ENCODE measurements at regions of chr1 and their contacts with region 1.

Region 1: GRCh38 chr1:63615768-63616420 is 22.7 kb downstream of the PGM1 start:
- DNase-seq: peak; percentile 61
- CTCF ChIP-seq: peak; percentile 65

Region 2: DNA sequence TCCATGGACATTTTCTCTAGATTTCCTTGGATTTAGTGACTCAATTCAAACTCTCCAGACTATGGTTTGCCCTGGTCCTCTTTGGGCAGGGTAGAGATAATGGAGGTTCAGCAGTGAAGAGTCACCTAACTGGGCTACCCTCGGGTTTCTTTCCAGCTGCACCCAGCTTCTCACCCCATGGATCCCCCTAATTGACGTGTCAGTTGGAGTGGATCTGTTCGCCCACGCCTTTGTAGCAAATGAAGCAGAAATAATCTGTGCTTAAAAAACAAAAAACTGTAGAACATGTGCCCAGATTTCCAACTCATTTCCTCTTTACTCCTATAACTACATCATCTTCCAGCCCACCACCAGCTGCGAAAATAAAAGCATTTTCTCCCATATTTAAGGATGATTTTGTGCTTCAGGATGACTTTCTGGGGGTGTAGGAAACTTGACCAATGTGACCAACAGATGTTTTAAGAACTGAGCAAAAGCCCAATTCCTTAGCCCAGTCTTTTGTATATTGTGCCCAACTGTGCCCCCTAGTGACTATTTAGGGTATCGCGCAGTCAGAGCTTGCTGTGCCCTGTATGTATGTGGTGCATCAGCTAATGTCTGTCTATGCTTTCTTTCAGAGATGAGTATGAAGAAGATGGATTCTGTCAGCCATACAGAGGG is 521.0 kb after region 1 on chr1:
- in situ Hi-C with region 1: loop called (anchors 25 kb)
- DNase-seq: peak; percentile 43
- CTCF ChIP-seq: peak; percentile 73

Region 3: DNA sequence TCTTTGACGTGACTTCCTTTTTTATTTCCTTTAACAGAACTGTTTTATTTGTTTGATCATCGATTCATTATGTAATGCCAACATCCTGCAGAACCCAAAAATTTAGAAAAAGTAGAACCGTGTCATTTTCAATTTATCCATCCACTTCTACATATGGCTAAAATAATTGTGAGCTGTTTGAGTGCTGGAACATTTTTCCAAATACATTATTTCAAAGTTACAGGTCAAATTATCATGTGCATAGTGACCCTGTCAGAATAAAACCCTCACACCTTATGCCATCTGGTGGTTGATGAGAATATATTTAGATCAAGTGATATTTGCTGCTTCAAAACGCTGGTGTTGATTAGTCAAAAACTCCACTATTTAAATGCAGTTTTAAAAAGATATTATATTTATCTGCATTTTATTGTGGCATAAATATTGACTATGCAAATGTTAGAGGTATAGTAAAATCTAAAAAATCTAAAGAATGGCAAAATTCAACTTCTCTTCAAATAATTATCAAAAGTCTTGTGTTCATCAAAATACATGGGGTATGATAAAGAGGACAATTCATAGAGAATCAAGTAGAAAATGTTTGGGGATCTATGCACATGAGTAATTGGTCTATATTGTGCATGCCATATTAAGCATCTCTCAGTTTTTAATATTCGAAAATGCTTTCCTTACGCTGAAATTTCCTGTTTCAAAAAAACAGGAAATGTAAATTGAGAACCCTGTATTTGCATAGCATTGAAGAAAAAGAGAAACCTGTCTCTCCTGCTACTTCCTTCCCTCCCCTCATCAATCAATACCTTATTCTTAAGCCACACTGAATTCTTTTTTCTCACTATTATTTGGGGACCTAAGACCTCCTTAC is 627.2 kb after region 1 on chr1:
- in situ Hi-C with region 1: loop called (anchors 25 kb)
- DNase-seq: no peak
- CTCF ChIP-seq: no peak

Measured in GM13976 (cell line).